Activated naive CD8-positive, alpha-beta T cell treated with anti-CD3 and anti-CD28 coated beads, Interleukin-2, amount 10 ng/mL, durations not matched to agents 7 days and 5 days (primary cell): ENCODE measurements at regions of chr19 and their contacts with region 1.

Region 1: DNA sequence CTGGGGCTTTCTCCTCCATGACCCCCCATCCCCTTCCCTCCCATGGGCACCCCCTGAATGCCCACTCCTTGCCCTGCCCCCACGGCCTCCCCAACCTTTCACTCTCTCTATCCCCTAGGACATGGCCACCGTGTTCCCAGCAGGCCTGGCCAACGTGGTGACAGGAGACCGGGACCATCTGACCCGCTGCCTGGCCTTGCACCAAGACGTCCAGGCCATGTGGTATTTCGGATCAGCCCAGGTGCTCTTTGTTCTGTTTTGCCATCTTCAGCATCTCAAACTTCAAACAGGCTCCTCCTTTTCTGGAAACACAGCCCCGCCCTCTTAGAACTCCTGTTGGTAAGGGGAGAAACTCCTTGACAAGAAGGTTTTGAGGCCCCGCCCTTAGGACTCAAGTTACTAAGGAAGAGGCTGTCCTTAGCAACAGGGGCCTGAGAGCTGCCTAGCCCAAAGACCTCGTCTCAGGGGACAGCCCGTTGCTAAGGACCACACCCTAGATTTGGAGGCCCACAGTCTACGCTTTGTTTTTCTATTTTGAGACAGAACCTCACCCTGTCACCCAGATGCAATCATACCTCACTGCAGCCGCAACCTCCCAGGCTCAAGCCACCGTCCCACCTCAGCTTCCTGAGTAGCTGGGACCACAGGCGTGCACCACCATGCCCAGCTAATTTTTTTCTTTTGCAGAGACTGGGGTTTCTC is 5.1 kb upstream of the FLT3LG start:
- DNase-seq: peak; percentile 87
- ATAC-seq: peak; percentile 67
- H3K4me3 Mint-ChIP-seq: peak overlapping the region; percentile 86
- H3K27ac Mint-ChIP-seq: peak overlapping the region; percentile 99
- H3K4me1 Mint-ChIP-seq: peaks cover 37% of the 10 kb centered on the region
- H3K27me3 Mint-ChIP-seq: no peaks in the 10 kb centered on the region

Region 2: GRCh38 chr19:49391581-49392399 is 77.1 kb before region 1 on chr19:
- POLR2A ChIA-PET with region 1: interaction called, 15 read pairs
- DNase-seq: peak; percentile 84
- ATAC-seq: peak; percentile 85
- H3K4me3 Mint-ChIP-seq: peak overlapping the region; percentile 2
- H3K27ac Mint-ChIP-seq: peak overlapping the region; percentile 14
- H3K4me1 Mint-ChIP-seq: peaks cover 14% of the 10 kb centered on the region
- H3K27me3 Mint-ChIP-seq: peaks cover 21% of the 10 kb centered on the region

Region 3: GRCh38 chr19:49443366-49444099 is 25.4 kb before region 1 on chr19:
- POLR2A ChIA-PET with region 1: interaction called, 10 read pairs
- DNase-seq: peak; percentile 98
- ATAC-seq: peak; percentile 88
- H3K4me3 Mint-ChIP-seq: peak overlapping the region; percentile 87
- H3K27ac Mint-ChIP-seq: peak overlapping the region; percentile 91
- H3K4me1 Mint-ChIP-seq: peaks cover 31% of the 10 kb centered on the region
- H3K27me3 Mint-ChIP-seq: peaks cover 40% of the 10 kb centered on the region

Region 4: DNA sequence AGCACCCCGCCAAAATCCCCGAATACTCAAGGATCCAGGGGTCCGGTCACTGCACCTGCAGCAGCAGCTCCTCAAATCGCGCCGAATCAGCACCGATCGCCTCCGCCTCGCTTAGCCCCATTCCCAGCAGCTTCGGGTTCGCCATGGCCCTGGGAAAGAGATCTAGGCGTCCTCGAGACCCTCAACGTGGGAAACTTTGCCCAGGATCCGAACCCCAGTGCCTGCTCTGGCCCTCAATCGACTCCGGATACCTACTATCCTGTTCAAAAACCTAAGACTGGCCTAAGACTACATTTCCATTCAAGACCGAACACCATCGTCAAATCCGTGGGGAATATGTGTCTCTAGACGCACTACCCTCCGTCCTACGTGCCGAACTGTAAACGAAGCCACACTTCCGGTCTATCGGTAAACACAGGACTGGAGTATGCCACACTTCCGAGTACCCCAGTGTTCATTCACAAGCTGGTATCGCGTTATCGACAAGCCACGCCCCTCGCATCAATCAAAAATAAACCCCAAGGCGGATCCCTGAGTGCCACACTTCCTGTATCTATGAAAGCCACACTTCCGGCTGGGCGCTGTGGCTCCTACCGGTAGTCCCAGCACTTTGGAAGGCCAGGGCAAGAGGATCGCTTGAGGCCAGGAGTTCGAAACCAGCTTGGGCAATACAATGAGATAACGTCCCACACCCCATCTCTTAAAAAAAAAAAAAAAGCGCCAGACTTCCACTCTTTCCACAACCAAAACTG is 17.3 kb before region 1 on chr19 and contains the start of gene PIH1D1:
- POLR2A ChIA-PET with region 1: interaction called, 128 read pairs
- DNase-seq: peak; percentile 87
- ATAC-seq: peak; percentile 59
- H3K4me3 Mint-ChIP-seq: peak within 1 kb of the TSS; percentile 100
- H3K27ac Mint-ChIP-seq: peak within 1 kb of the TSS; percentile 100
- H3K4me1 Mint-ChIP-seq: peaks cover 32% of the 10 kb centered on the region
- H3K27me3 Mint-ChIP-seq: no peaks in the 10 kb centered on the region
- total RNA-seq, gene PIH1D1: 143 to 148 TPM

Region 5: GRCh38 chr19:49497047-49497788 is 28.3 kb after region 1 on chr19:
- POLR2A ChIA-PET with region 1: interaction called, 16 read pairs
- DNase-seq: peak; percentile 68
- ATAC-seq: no peak
- H3K4me3 Mint-ChIP-seq: peak overlapping the region; percentile 95
- H3K27ac Mint-ChIP-seq: peak overlapping the region; percentile 92
- H3K4me1 Mint-ChIP-seq: peaks cover 42% of the 10 kb centered on the region
- H3K27me3 Mint-ChIP-seq: no peaks in the 10 kb centered on the region

Region 6: GRCh38 chr19:49515767-49516166 is 46.9 kb after region 1 on chr19:
- POLR2A ChIA-PET with region 1: no interaction called
- DNase-seq: no peak
- ATAC-seq: no peak
- H3K4me3 Mint-ChIP-seq: no peak overlapping the region
- H3K27ac Mint-ChIP-seq: no peak overlapping the region
- H3K4me1 Mint-ChIP-seq: peaks cover 20% of the 10 kb centered on the region
- H3K27me3 Mint-ChIP-seq: peaks cover 8% of the 10 kb centered on the region